ENCODE measurements at regions of chr2 and their contacts with region 1.

Region 1: DNA sequence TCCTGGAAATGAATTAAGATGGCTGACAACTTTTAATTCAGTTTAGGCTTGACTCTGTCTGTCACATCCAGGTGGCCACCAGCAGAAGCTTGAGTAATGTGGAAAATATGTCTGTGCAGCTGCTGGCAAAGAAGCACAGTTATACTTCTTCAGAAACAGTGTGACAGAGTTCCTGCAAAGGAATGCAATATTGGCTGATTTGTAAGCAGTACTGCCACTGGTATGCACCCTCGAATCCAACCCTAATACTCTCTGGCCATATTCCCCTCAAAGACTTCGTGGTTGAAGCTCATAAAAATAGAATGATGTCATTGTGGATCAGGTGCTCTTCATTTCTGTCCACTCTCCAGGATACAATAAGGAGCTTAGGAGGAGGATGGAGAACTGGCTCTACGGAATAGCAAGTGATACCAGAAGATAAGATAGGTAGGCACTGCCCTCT is 86.2 kb downstream of the METTL8 start:
- DNase-seq: no peak
- H3K4me3 Mint-ChIP-seq: no peak overlapping the region
- H3K27ac Mint-ChIP-seq: peak overlapping the region; percentile 11
- H3K4me1 Mint-ChIP-seq: peaks cover 24% of the 10 kb centered on the region
- H3K27me3 Mint-ChIP-seq: no peaks in the 10 kb centered on the region

Region 2: GRCh38 chr2:171390941-171391516 is 43.4 kb after region 1 on chr2:
- intact Hi-C with region 1: loop called (anchors 5 kb)
- DNase-seq: peak; percentile 22
- H3K4me3 Mint-ChIP-seq: no peak overlapping the region
- H3K27ac Mint-ChIP-seq: peak overlapping the region; percentile 77
- H3K4me1 Mint-ChIP-seq: peaks cover 39% of the 10 kb centered on the region
- H3K27me3 Mint-ChIP-seq: no peaks in the 10 kb centered on the region

Measured in activated T-helper 2 cell treated with anti-CD3 and anti-CD28 coated beads, Interferon-gamma antibody, Interleukin-2, Interleukin-4, amounts not matched to agents 10 μg/mL and 5 μg/mL and 100 μg/mL, durations not matched to agents 14 hours and 24 hours and 36 hours (primary cell).